Breast epithelium (tissue), 4 donors: ENCODE measurements at regions of chr13 and their contacts with region 1.

Region 1: DNA sequence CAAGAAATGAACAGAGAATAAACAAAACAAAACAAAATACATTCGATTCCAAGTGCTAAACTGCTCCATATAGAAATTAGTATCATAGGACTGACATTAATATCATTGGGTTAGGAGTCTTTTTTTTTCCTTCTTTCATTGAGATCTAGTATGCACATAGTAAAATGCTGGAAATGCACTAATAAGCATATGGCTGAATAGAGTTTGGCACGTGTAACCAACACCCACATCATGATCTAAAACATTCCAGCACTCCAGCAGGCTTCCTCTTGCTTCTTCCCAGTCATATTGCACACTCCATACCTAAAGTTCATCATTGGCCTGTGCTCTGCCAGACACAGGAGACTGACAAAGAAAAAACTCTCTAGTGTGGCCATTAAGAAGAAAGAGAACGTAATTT is 117.5 kb downstream of the POU4F1 start:
- DNase-seq: no peak
- H3K4me3 ChIP-seq: no peak overlapping the region
- H3K27ac ChIP-seq: no peak overlapping the region
- H3K4me1 ChIP-seq: no peaks in the 10 kb centered on the region
- H3K27me3 ChIP-seq: no peaks in the 10 kb centered on the region
- CTCF ChIP-seq: no peak
- POLR2A ChIP-seq: no peak

Region 2: DNA sequence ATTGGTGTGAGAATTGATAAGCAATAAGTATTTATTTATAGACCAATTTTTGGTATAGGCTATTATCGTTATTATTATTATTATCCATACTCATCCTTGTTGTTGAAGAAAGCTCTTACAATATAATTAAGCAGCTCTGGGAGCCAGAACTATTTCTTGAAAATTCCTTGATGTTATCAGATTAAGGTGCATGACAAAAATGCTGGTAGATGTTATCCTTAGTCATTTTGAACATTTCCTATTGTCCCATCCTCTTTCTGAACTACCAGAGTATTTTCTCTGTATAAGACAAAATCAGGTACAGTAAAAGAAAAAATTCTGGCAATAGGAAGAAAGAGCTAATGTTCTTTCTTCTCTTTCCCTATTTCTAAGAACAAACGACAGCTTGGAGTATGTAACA is 212.7 kb before region 1 on chr13:
- intact Hi-C with region 1: no loop called
- DNase-seq: no peak
- H3K4me3 ChIP-seq: no peak overlapping the region
- H3K27ac ChIP-seq: no peak overlapping the region
- H3K4me1 ChIP-seq: no peaks in the 10 kb centered on the region
- H3K27me3 ChIP-seq: no peaks in the 10 kb centered on the region
- CTCF ChIP-seq: no peak
- POLR2A ChIP-seq: no peak

Region 3: GRCh38 chr13:78437781-78438180 is 48.0 kb before region 1 on chr13:
- intact Hi-C with region 1: loop called (anchors 2 kb)
- DNase-seq: no peak
- H3K4me3 ChIP-seq: no peak overlapping the region
- H3K27ac ChIP-seq: no peak overlapping the region
- H3K4me1 ChIP-seq: no peaks in the 10 kb centered on the region
- H3K27me3 ChIP-seq: no peaks in the 10 kb centered on the region
- CTCF ChIP-seq: no peak
- POLR2A ChIP-seq: no peak